ENCODE measurements at regions of chr6 and their contacts with region 1.

Region 1: GRCh38 chr6:160348142-160349019 is at the start of gene SLC22A3:
- DNase-seq: no peak
- H3K4me3 ChIP-seq: peak within 1 kb of the TSS; percentile 72 to 88 (median 78)
- H3K27ac ChIP-seq: peak within 1 kb of the TSS; percentile 83 to 87 (median 85)
- H3K4me1 ChIP-seq: peaks cover 0 to 32% (median 3%) of the 10 kb centered on the region in 3 donors
- H3K27me3 ChIP-seq: peaks cover 0 to 32% (median 0%) of the 10 kb centered on the region in 4 donors
- CTCF ChIP-seq: peak in 4 of 6 experiments; percentile 22 to 46 (median 28)
- POLR2A ChIP-seq: peak in 1 of 4 donors; percentile 29
- total RNA-seq, gene SLC22A3: 5.5 to 14.2 (median 12.0) TPM

Region 2: GRCh38 chr6:160178271-160178670 is 170.1 kb before region 1 on chr6:
- intact Hi-C with region 1: no loop called
- DNase-seq: no peak
- H3K4me3 ChIP-seq: no peak overlapping the region
- H3K27ac ChIP-seq: no peak overlapping the region
- H3K4me1 ChIP-seq: no peaks in the 10 kb centered on the region
- H3K27me3 ChIP-seq: no peaks in the 10 kb centered on the region
- CTCF ChIP-seq: no peak
- POLR2A ChIP-seq: no peak

Region 3: GRCh38 chr6:160439751-160440150 is 91.4 kb after region 1 on chr6:
- intact Hi-C with region 1: loop called (anchors 10 kb)
- DNase-seq: no peak
- H3K4me3 ChIP-seq: no peak overlapping the region
- H3K27ac ChIP-seq: no peak overlapping the region
- H3K4me1 ChIP-seq: no peaks in the 10 kb centered on the region
- H3K27me3 ChIP-seq: no peaks in the 10 kb centered on the region
- CTCF ChIP-seq: no peak
- POLR2A ChIP-seq: no peak

Region 4: DNA sequence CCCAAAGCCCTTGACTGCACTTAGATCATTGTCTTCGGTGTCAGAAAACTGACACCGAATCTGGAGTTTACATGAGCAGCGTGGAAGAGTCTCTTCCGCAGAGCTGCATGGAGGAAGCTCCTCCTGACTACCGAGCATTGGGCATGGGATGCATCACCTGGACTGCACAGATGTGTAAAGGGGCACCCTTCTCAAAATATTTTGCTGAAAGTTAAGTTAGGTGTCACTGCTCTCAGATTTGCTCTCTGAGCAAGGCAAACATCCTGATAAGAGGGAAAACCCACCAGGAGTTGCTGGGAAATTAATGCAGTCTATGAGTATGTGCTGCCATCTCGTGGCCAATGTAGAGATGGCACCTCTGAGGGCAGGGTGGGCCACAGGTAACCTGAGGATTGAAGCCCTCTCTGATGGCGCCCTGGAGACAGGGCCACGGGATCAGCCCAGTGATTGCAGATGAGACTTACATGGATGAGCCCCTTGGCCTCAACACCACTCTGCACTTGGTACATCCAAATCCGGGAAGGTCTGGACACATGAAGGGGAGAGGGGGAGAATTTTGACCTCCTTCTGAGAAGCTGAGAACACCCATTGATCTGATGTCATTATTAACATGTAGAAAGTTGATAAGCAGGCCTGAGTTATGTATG is 185.8 kb after region 1 on chr6:
- intact Hi-C with region 1: no loop called
- DNase-seq: no peak
- H3K4me3 ChIP-seq: peak overlapping the region in 1 of 4 donors; percentile 22
- H3K27ac ChIP-seq: no peak overlapping the region
- H3K4me1 ChIP-seq: peaks cover 0 to 7% (median 2%) of the 10 kb centered on the region in 3 donors
- H3K27me3 ChIP-seq: peaks cover 0 to 6% (median 0%) of the 10 kb centered on the region in 4 donors
- CTCF ChIP-seq: peak; percentile 63 to 92 (median 82)
- POLR2A ChIP-seq: no peak

Measured in esophagus squamous epithelium (tissue), 5 donors.